ENCODE measurements at regions of chr7 and their contacts with region 1.

Region 1: GRCh38 chr7:25894902-25895791 is 256.9 kb upstream of the NFE2L3 start:
- DNase-seq: peak; percentile 91
- H3K4me3 Mint-ChIP-seq: peak overlapping the region; percentile 62
- H3K27ac Mint-ChIP-seq: no peak overlapping the region
- H3K4me1 Mint-ChIP-seq: peaks cover 30% of the 10 kb centered on the region
- H3K27me3 Mint-ChIP-seq: peaks cover 21% of the 10 kb centered on the region
- CTCF ChIP-seq: peak; percentile 93

Region 2: GRCh38 chr7:26167301-26167934 is 272.3 kb after region 1 on chr7:
- CTCF ChIA-PET with region 1: no interaction called
- intact Hi-C with region 1: loop called (anchors 5 kb)
- DNase-seq: no peak
- H3K4me3 Mint-ChIP-seq: peak overlapping the region; percentile 40
- H3K27ac Mint-ChIP-seq: peak overlapping the region; percentile 83
- H3K4me1 Mint-ChIP-seq: peaks cover 44% of the 10 kb centered on the region
- H3K27me3 Mint-ChIP-seq: no peaks in the 10 kb centered on the region
- CTCF ChIP-seq: no peak

Region 3: DNA sequence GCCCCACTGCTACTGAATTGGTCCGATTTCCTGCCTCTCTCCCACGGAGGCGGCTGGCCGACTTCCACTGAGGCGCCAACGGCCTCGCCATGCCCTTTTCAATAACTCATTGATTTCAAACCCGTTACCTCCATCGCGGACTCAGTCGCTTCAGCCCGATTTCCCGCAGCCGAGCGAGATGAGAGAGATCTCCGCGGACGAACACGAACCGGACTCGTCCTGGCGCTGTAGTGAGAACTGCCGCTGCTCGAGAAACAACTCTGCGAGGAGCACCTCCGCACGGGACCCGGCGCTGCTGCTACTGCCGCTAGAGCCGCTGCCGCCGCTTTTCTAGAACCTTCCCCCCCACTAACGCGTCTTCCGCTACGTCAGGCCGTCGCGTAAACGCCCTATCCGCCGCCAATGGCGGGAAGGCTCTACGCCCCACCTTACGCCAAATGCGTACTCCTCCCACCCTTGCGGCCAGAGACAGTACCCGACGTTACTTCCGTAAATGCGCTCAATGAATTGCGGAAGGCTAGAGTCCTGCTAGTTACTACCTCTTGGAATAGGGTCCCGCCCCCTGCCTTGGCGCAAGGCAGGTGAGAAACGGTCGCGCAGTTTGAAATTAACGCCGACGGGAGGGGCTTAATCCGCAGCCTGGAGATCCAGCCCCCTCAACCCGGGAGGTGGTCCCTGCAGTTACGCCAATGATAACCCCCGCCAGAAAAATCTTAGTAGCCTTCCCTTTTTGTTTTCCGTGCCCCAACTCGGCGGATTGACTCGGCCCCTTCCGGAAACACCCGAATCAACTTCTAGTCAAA is 305.5 kb after region 1 on chr7 and contains the start of gene HNRNPA2B1:
- CTCF ChIA-PET with region 1: interaction called, 5 read pairs
- intact Hi-C with region 1: loop called (anchors 5 kb)
- DNase-seq: peak; percentile 99
- H3K4me3 Mint-ChIP-seq: peak within 1 kb of the TSS; percentile 96
- H3K27ac Mint-ChIP-seq: peak within 1 kb of the TSS; percentile 99
- H3K4me1 Mint-ChIP-seq: peaks cover 37% of the 10 kb centered on the region
- H3K27me3 Mint-ChIP-seq: no peaks in the 10 kb centered on the region
- CTCF ChIP-seq: no peak
- total RNA-seq, gene HNRNPA2B1: 880 and 924 TPM in 2 replicates

Region 4: GRCh38 chr7:26346611-26347203 is 451.6 kb after region 1 on chr7:
- CTCF ChIA-PET with region 1: interaction called, 3 read pairs
- intact Hi-C with region 1: loop called (anchors 5 kb)
- DNase-seq: peak; percentile 53
- H3K4me3 Mint-ChIP-seq: no peak overlapping the region
- H3K27ac Mint-ChIP-seq: no peak overlapping the region
- H3K4me1 Mint-ChIP-seq: peaks cover 29% of the 10 kb centered on the region
- H3K27me3 Mint-ChIP-seq: no peaks in the 10 kb centered on the region
- CTCF ChIP-seq: no peak